ENCODE measurements at regions of chr12 and their contacts with region 1.

Region 1: DNA sequence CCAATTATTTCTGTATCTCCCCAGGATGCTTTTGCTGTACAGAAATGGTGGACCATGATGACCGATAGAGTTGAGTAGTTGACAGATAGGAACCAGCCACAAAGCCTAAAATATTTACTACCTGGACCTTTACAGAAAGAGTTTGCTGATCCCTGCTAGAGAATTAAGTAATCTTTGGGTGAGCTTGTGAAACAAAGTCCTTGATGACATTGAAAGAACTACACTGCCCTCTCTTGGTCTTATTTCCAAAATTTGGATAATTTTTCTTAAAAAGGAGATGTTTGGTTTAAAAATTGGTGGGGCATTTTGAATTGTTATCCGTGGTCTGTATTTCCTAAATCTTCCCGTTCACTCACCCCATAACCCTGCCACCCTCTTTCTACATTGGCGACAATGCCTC is 13.7 kb upstream of the TCTN1 start:
- DNase-seq: no peak
- ATAC-seq: peak; percentile 50

Region 2: GRCh38 chr12:110513842-110514241 is 86.4 kb before region 1 on chr12:
- intact Hi-C with region 1: loop called (anchors 5 kb)
- DNase-seq: no peak
- ATAC-seq: no peak

Region 3: GRCh38 chr12:110826592-110827200 is 226.4 kb after region 1 on chr12:
- intact Hi-C with region 1: loop called (anchors 10 kb)
- DNase-seq: peak; percentile 93
- ATAC-seq: peak; percentile 96

Measured in Right ventricle myocardium superior (tissue), 1 donor.